Activated T-helper 1 cell treated with anti-CD3 and anti-CD28 coated beads, Interleukin-12 subunit alpha, Interleukin-12 subunit beta, Interleukin-2, Interleukin-4 antibody, amounts not matched to agents 30 ng/mL and 10 ng/mL and 1 ng/mL, durations not matched to agents 14 hours and 24 hours and 36 hours (primary cell): ENCODE measurements at regions of chr1 and their contacts with region 1.

Region 1: GRCh38 chr1:165768513-165769394 is at the start of gene TMCO1:
- DNase-seq: peak; percentile 94
- H3K4me3 Mint-ChIP-seq: peak within 1 kb of the TSS; percentile 99
- H3K27ac Mint-ChIP-seq: peak within 1 kb of the TSS; percentile 100
- H3K4me1 Mint-ChIP-seq: peaks cover 53% of the 10 kb centered on the region
- H3K27me3 Mint-ChIP-seq: no peaks in the 10 kb centered on the region
- total RNA-seq, gene TMCO1: 97.1 and 102 TPM in 2 replicates

Region 2: GRCh38 chr1:166838766-166839599 is 1070.2 kb after region 1 on chr1 and contains the start of gene POGK:
- intact Hi-C with region 1: loop called (anchors 5 kb)
- DNase-seq: peak; percentile 84
- H3K4me3 Mint-ChIP-seq: peak within 1 kb of the TSS; percentile 94
- H3K27ac Mint-ChIP-seq: peak within 1 kb of the TSS; percentile 97
- H3K4me1 Mint-ChIP-seq: peaks cover 64% of the 10 kb centered on the region
- H3K27me3 Mint-ChIP-seq: no peaks in the 10 kb centered on the region
- total RNA-seq, gene POGK: 51.4 and 54.1 TPM in 2 replicates